Heart right ventricle (tissue), 16 donors: ENCODE measurements at regions of chr3 and their contacts with region 1.

Region 1: GRCh38 chr3:64903006-64903405 is 215.2 kb upstream of the ADAMTS9 start:
- DNase-seq: no peak
- ATAC-seq: no peak
- H3K4me3 ChIP-seq: no peak overlapping the region
- H3K27ac ChIP-seq: peak overlapping the region in 9 of 10 donors; percentile 21 to 91 (median 80)
- H3K4me1 ChIP-seq: peaks cover 8 to 84% (median 66%) of the 10 kb centered on the region in 9 donors
- H3K27me3 ChIP-seq: no peaks in the 10 kb centered on the region
- CTCF ChIP-seq: no peak

Region 2: GRCh38 chr3:64559588-64559987 is 343.4 kb before region 1 on chr3:
- intact Hi-C with region 1: no loop called
- DNase-seq: no peak
- ATAC-seq: no peak
- H3K4me3 ChIP-seq: no peak overlapping the region
- H3K27ac ChIP-seq: no peak overlapping the region
- H3K4me1 ChIP-seq: peaks cover 0 to 12% (median 0%) of the 10 kb centered on the region in 9 donors
- H3K27me3 ChIP-seq: no peaks in the 10 kb centered on the region
- CTCF ChIP-seq: no peak

Region 3: DNA sequence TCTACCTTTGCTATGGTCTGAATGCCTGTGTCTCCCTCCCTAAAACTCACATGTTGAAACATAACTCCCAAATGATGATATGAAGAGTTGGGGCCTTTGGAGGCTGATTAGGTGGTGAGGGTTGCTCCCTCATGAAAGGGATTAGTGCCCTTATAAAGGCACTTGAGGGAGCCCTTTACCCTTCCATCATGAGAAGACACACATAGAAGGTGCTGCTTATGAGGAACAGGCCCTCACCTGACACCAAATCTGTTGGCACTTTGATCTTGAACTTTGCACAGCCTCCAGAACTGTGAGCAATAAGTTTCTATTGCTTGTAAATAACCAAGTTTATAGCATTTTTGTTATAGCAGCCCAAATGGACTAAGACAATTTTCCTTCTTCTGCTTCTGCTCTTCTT is 139.0 kb before region 1 on chr3:
- intact Hi-C with region 1: loop called in 1 of 10 experiments (anchors 1 kb)
- DNase-seq: no peak
- ATAC-seq: no peak
- H3K4me3 ChIP-seq: no peak overlapping the region
- H3K27ac ChIP-seq: no peak overlapping the region
- H3K4me1 ChIP-seq: peaks cover 8 to 60% (median 28%) of the 10 kb centered on the region in 9 donors
- H3K27me3 ChIP-seq: no peaks in the 10 kb centered on the region
- CTCF ChIP-seq: no peak